ENCODE measurements at regions of chr5 and their contacts with region 1.

Region 1: DNA sequence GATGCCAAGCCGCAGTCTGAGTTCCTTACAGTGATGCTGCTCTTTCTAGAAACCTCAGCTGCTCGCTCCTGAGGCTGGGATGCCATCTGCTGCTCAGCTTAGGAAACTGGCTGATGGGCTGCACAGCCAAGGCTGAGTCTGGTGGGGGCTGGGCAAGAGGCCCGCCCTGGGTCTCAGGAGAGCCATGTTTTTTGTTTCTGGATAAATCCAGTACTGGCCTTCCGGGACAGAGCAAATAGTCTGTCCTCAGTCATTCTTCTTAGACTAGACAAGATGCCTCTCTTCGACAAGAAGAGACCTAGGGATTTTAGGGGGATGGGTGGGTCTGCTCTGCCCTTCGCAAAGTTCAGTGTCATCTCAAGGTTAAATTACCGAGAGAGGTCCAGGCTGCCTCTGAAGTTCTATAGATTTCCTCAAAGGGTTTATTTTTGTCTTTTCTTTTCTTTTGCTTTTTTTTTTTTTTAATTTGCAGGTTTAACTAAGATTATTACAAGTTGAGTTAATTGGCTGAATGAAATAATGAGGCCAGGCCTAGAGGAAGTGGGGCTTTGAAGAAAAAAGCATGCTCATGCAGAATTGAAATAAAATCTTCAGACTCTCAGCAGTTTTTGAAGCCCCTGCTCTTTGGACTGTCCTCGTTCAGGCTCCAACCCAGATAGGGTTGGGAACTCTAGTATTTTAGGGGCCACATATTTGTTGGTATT is 30.6 kb upstream of the MATR3 start:
- DNase-seq: peak; percentile 86 to 94
- H3K4me3 ChIP-seq: no peak overlapping the region
- H3K27ac ChIP-seq: peak overlapping the region; percentile 34 to 50
- H3K4me1 ChIP-seq: peaks cover 0 to 11% (median 9%) of the 10 kb centered on the region in 4 donors
- H3K27me3 ChIP-seq: no peaks in the 10 kb centered on the region
- CTCF ChIP-seq: peak; percentile 95

Region 2: GRCh38 chr5:138583984-138584637 is 678.8 kb before region 1 on chr5:
- intact Hi-C with region 1: loop called (anchors 5 kb)
- DNase-seq: no peak
- H3K4me3 ChIP-seq: no peak overlapping the region
- H3K27ac ChIP-seq: no peak overlapping the region
- H3K4me1 ChIP-seq: no peaks in the 10 kb centered on the region
- H3K27me3 ChIP-seq: no peaks in the 10 kb centered on the region
- CTCF ChIP-seq: no peak

Region 3: DNA sequence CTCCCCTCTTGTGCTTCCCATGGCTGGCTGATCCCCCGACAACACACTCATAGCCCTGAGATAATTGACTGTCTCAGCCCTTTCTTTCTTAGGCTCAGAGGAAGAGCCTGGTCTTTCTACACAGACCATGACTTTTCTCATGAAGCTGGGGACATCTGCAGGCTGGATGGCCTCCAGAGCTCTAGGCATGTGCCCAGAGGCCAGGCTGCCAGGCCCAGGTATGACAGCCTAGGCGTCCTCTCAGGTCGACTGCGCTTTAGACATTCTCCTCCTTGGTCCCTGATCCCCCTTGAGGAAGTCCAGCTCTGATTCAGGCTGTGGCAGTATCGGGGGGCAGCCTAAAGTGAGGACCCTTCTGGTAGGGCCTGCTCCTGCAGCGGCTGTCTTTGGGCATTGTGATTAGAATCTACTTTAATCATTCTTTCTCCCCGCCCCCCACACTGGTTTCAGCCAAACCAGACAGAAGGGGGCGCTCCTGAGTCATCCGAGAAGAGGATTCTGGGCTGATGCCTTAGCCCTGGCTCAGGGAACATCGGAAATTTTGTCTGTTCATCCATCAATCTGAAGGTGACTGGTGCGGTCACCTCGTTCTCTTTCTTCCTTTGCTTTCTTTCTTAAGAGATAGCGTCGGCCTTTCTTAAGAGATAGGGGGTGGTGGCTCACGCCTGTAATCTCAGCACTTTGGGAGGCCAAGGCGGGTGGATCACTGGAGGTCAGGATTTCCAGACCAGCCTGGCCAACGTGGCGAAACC is 621.2 kb before region 1 on chr5:
- intact Hi-C with region 1: loop called (anchors 5 kb)
- DNase-seq: peak; percentile 67 to 72
- H3K4me3 ChIP-seq: no peak overlapping the region
- H3K27ac ChIP-seq: no peak overlapping the region
- H3K4me1 ChIP-seq: no peaks in the 10 kb centered on the region
- H3K27me3 ChIP-seq: peaks cover 0 to 8% of the 10 kb centered on the region in 2 donors
- CTCF ChIP-seq: peak; percentile 57 to 59

Region 4: DNA sequence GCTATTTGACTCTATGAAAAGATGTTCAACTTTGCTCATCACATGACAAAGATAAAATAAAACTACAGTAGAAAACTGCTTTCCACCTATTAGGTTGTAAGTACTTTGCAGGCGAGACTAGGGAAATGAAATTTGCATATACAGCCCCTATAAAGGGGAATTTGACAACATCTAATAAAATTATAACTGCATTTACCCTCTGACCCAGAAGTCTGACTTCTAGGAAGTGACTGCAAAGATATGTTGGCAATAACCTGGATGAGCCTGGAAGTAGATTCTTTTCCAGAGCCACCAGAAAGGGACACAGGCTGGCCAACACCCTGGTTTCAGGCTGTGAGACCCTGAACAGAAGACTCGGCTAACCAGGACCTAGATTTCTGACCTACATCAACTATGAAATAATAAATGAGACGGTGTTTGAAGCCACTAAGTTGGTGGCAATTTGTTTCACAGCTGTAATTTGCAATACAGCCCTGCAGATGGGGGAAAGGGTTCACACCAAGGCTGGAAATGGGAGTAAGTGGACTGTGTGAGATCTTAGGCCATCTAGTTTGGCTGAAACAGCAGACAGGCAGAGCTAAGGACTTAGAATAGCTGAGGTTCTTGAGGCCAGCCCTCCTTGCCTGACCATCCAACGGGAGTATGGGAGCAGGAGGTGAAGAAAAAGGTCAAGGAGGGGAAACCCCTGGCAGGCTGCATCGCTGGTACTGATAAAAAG is 171.3 kb before region 1 on chr5:
- intact Hi-C with region 1: loop called (anchors 2 kb)
- DNase-seq: no peak
- H3K4me3 ChIP-seq: no peak overlapping the region
- H3K27ac ChIP-seq: no peak overlapping the region
- H3K4me1 ChIP-seq: peaks cover 0 to 11% (median 3%) of the 10 kb centered on the region in 4 donors
- H3K27me3 ChIP-seq: no peaks in the 10 kb centered on the region
- CTCF ChIP-seq: peak; percentile 54 to 61